Thyroid gland (tissue), 4 donors: ENCODE measurements at regions of chr17 and their contacts with region 1.

Region 1: DNA sequence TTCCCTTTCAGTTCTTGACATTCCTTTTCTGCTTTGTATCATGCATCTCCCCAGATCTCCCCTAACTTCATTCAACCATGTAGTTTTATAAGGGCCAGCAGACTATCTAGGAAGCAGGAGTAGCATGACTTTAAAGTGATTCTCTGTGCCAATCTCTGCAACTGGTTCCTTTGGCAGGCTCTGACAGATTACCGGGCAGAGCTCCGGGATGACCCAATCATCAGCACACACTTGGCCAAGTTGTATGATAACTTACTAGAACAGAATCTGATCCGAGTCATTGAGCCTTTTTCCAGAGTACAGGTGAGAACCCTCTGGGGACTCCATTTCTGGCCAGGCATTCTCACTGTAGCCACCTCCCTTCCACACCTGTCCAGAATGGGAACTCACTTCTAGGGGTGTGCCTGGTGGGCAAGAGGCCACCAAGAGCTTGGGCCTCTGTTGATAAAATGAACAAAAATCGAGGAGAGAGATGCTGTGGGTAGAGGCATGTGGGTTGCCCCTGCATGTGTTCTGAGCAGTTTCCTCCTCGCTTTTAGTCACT is 7.6 kb upstream of the CDK5R1 start:
- DNase-seq: no peak
- H3K4me3 ChIP-seq: no peak overlapping the region
- H3K27ac ChIP-seq: no peak overlapping the region
- H3K4me1 ChIP-seq: peaks cover 0 to 10% of the 10 kb centered on the region in 2 donors
- H3K27me3 ChIP-seq: no peaks in the 10 kb centered on the region
- CTCF ChIP-seq: no peak
- POLR2A ChIP-seq: no peak

Region 2: DNA sequence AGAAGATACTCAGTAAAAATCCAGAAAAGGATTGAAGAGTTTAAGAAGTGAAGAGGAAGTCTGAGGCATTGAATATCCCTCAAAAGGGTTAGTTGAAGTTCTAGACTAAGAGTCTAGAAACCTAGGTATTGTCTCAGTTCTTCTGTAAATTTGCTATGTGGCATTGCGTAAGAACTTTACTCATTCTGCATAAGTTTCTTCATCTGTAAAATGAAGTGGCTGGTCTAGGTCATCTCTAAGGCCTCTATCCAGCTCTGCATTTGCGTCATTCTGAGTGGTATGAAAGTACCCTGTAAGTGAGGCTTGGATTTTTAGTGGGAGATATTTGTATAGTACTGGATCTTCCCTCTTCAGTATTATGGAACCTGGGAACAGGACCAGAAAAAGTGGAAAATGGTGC is 267.6 kb after region 1 on chr17:
- intact Hi-C with region 1: loop called (anchors 10 kb)
- DNase-seq: no peak
- H3K4me3 ChIP-seq: no peak overlapping the region
- H3K27ac ChIP-seq: no peak overlapping the region
- H3K4me1 ChIP-seq: no peaks in the 10 kb centered on the region
- H3K27me3 ChIP-seq: no peaks in the 10 kb centered on the region
- CTCF ChIP-seq: no peak
- POLR2A ChIP-seq: no peak